Activated B cell treated with CpG ODN at 0.5 μM for 24 hours (primary cell): ENCODE measurements at regions of chr11 and their contacts with region 1.

Region 1: GRCh38 chr11:6353367-6353987 is 33.2 kb upstream of the CAVIN3 start:
- DNase-seq: peak; percentile 29
- ATAC-seq: peak; percentile 88
- H3K4me3 Mint-ChIP-seq: no peak overlapping the region
- H3K27ac Mint-ChIP-seq: no peak overlapping the region
- H3K4me1 Mint-ChIP-seq: peaks cover 3% of the 10 kb centered on the region
- H3K27me3 Mint-ChIP-seq: peaks cover 7% of the 10 kb centered on the region
- CTCF ChIP-seq: no peak

Region 2: GRCh38 chr11:4636962-4637661 is 1716.4 kb before region 1 on chr11 and contains the start of gene OR51D1:
- CTCF ChIA-PET with region 1: interaction called, 7 read pairs
- POLR2A ChIA-PET with region 1: no interaction called
- intact Hi-C with region 1: loop called (anchors 2 kb)
- DNase-seq: peak; percentile 39
- ATAC-seq: peak; percentile 84
- H3K4me3 Mint-ChIP-seq: no peak within 1 kb of the TSS
- H3K27ac Mint-ChIP-seq: no peak within 1 kb of the TSS
- H3K4me1 Mint-ChIP-seq: no peaks in the 10 kb centered on the region
- H3K27me3 Mint-ChIP-seq: peaks cover 4% of the 10 kb centered on the region
- CTCF ChIP-seq: peak; percentile 59
- total RNA-seq, gene OR51D1: not detected in 2 replicates

Region 3: GRCh38 chr11:5600374-5600851 is 753.1 kb before region 1 on chr11:
- CTCF ChIA-PET with region 1: no interaction called
- POLR2A ChIA-PET with region 1: no interaction called
- intact Hi-C with region 1: loop called (anchors 10 kb)
- DNase-seq: peak; percentile 25
- ATAC-seq: peak; percentile 95
- H3K4me3 Mint-ChIP-seq: no peak overlapping the region
- H3K27ac Mint-ChIP-seq: no peak overlapping the region
- H3K4me1 Mint-ChIP-seq: peaks cover 17% of the 10 kb centered on the region
- H3K27me3 Mint-ChIP-seq: peaks cover 3% of the 10 kb centered on the region
- CTCF ChIP-seq: no peak

Region 4: DNA sequence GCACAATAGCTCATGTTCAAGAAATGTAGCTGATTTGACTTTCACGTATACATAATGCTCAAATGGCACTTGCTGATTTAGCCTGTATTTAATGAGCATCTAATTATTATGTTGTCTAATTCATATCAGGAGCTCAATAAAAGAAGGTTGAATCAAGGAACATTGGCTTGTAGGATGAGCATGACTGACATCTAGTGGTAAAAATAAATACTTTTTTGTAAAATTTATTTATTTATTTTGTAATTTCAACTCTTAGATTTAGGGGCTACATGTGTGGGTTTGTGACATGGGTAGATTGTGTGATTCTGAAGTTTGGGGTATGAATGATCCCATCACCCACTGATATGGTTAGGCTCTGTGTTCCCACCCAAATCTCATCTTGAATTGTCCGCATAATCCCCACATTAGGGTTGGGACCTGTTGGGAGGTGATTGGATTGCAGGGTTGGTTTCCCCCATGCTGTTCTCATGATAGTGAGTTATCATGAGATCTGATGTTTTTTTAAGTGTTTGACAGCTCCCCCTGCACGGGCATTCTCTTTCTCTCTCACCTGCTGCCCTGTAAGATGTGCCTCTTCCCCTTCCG is 462.2 kb before region 1 on chr11:
- CTCF ChIA-PET with region 1: no interaction called
- POLR2A ChIA-PET with region 1: no interaction called
- intact Hi-C with region 1: loop called (anchors 1 kb)
- DNase-seq: no peak
- ATAC-seq: no peak
- H3K4me3 Mint-ChIP-seq: no peak overlapping the region
- H3K27ac Mint-ChIP-seq: no peak overlapping the region
- H3K4me1 Mint-ChIP-seq: no peaks in the 10 kb centered on the region
- H3K27me3 Mint-ChIP-seq: no peaks in the 10 kb centered on the region
- CTCF ChIP-seq: no peak

Region 5: DNA sequence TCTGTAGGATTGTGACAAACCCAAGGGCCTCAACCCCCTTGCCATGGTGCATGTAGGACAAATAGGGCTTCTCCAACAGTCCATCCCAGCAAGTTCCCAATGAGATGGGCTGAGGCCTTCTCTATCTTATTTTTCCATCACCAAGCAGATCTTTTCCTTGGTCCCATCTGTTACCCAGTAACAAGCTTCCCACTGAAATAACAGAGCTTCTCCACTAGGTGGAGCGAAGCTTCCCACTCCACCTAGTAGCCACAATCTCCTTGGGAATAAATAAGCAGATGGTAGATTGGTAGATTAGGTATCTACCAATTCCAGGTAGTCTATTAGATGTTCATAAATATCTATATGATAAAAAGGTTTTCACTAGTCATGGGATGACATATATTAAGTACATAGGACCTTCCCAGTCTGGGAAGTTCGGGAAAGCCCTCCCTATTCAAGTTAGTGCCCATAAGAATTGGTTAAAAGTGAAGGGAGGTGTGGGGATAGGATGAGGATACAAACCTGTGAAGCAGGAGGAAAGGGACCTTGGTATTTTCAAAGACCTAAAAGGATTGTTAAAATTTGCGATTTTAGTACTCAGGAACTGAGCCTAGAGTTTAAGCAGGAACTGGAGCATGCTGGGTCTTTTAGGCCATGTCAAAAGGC is 360.7 kb before region 1 on chr11:
- CTCF ChIA-PET with region 1: interaction called, 3 read pairs
- POLR2A ChIA-PET with region 1: no interaction called
- intact Hi-C with region 1: loop called (anchors 1 kb)
- DNase-seq: no peak
- ATAC-seq: no peak
- H3K4me3 Mint-ChIP-seq: no peak overlapping the region
- H3K27ac Mint-ChIP-seq: no peak overlapping the region
- H3K4me1 Mint-ChIP-seq: no peaks in the 10 kb centered on the region
- H3K27me3 Mint-ChIP-seq: peaks cover 3% of the 10 kb centered on the region
- CTCF ChIP-seq: no peak

Region 6: GRCh38 chr11:6022956-6023355 is 330.5 kb before region 1 on chr11:
- CTCF ChIA-PET with region 1: interaction called, 8 read pairs
- POLR2A ChIA-PET with region 1: no interaction called
- intact Hi-C with region 1: loop called (anchors 1 kb)
- DNase-seq: no peak
- ATAC-seq: no peak
- H3K4me3 Mint-ChIP-seq: no peak overlapping the region
- H3K27ac Mint-ChIP-seq: no peak overlapping the region
- H3K4me1 Mint-ChIP-seq: no peaks in the 10 kb centered on the region
- H3K27me3 Mint-ChIP-seq: peaks cover 17% of the 10 kb centered on the region
- CTCF ChIP-seq: no peak

Region 7: GRCh38 chr11:6251120-6251733 is 102.2 kb before region 1 on chr11:
- CTCF ChIA-PET with region 1: interaction called, 10 read pairs
- POLR2A ChIA-PET with region 1: no interaction called
- intact Hi-C with region 1: loop called (anchors 1 kb)
- DNase-seq: no peak
- ATAC-seq: peak; percentile 64
- H3K4me3 Mint-ChIP-seq: no peak overlapping the region
- H3K27ac Mint-ChIP-seq: no peak overlapping the region
- H3K4me1 Mint-ChIP-seq: no peaks in the 10 kb centered on the region
- H3K27me3 Mint-ChIP-seq: no peaks in the 10 kb centered on the region
- CTCF ChIP-seq: no peak

Region 8: DNA sequence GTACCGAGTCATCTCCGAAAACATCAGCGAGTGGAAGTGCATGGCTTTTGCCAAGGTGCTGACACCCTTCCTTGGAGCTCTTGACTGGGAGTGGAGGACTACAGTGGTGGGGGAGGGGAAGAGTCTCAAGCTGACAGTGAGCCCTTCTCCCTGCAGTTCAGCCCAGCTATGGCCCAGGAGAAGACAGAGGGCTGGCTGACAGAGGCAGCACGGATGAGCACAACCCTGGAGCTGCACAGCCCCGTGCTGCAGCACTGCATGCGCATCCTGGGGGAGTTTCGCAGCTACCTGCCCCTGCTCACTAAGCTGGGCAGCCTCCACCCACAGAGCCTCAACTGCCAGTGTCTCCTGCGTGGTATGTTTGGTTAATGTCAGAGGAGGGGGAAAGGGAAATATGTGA is 185.0 kb after region 1 on chr11:
- CTCF ChIA-PET with region 1: no interaction called
- POLR2A ChIA-PET with region 1: no interaction called
- intact Hi-C with region 1: no loop called
- DNase-seq: no peak
- ATAC-seq: no peak
- H3K4me3 Mint-ChIP-seq: no peak overlapping the region
- H3K27ac Mint-ChIP-seq: no peak overlapping the region
- H3K4me1 Mint-ChIP-seq: no peaks in the 10 kb centered on the region
- H3K27me3 Mint-ChIP-seq: no peaks in the 10 kb centered on the region
- CTCF ChIP-seq: no peak